Tibial artery (tissue), 4 donors: ENCODE measurements at regions of chr3 and their contacts with region 1.

Region 1: DNA sequence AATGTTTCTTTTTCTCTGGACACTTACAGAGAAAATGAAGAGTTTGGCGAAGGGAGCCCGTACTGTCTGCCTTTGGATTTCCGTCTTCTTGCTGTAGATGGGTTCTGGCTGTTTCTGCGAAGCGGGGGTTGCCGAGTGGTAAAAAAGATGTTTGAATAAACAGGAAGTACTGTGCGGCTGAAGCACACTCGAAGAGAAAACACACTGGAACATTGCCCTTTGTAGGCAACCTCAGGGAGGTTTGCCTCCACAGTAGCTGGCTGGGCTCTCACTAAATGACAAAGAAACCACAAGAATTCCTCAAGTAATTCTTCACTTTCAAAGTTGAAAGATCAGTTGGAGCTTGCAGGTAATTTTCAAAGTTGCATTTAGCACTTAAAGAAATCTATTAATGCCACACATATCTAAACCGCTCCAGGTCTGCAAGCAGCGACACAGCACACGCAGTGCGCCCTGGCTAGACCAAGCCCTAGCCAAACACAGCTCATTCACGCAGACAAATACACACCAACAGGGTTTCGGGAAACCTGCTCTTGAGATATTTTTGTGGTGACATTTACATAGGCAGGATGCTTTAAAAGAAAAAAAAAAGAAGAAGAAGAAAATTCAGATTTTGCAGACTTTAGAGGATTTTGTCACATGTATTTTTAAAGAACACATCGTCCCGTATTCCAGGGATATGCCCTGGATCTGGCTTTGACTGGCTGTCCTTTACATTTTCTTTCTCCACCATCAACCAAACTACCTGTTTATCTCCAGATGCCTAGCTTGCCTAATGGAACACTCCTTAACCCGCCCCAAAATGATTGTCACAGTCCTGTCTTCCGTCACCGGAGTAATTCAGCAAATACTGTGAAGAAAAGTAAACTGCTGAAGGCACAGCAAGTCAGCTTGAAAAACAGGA is 452.8 kb downstream of the FOXP1 start:
- DNase-seq: peak; percentile 76 to 79
- H3K4me3 ChIP-seq: peak overlapping the region; percentile 59 to 62
- H3K27ac ChIP-seq: peak overlapping the region; percentile 84 to 89
- H3K4me1 ChIP-seq: peaks cover 0 to 79% (median 38%) of the 10 kb centered on the region in 4 donors
- H3K27me3 ChIP-seq: no peaks in the 10 kb centered on the region
- CTCF ChIP-seq: no peak

Region 2: GRCh38 chr3:71064288-71064955 is 66.3 kb before region 1 on chr3:
- intact Hi-C with region 1: loop called (anchors 5 kb)
- DNase-seq: peak; percentile 56 to 79
- H3K4me3 ChIP-seq: peak overlapping the region; percentile 75 to 77
- H3K27ac ChIP-seq: peak overlapping the region; percentile 94 to 99
- H3K4me1 ChIP-seq: peaks cover 0 to 65% (median 37%) of the 10 kb centered on the region in 4 donors
- H3K27me3 ChIP-seq: no peaks in the 10 kb centered on the region
- CTCF ChIP-seq: peak in 1 of 2 experiments; percentile 44

Region 3: GRCh38 chr3:71168880-71169411 is 38.2 kb after region 1 on chr3:
- intact Hi-C with region 1: loop called (anchors 2 kb)
- DNase-seq: no peak
- H3K4me3 ChIP-seq: peak overlapping the region in 1 of 2 donors; percentile 14
- H3K27ac ChIP-seq: peak overlapping the region; percentile 71 to 80
- H3K4me1 ChIP-seq: peaks cover 0 to 93% (median 40%) of the 10 kb centered on the region in 4 donors
- H3K27me3 ChIP-seq: no peaks in the 10 kb centered on the region
- CTCF ChIP-seq: no peak

Region 4: GRCh38 chr3:71210257-71211007 is 79.7 kb after region 1 on chr3:
- intact Hi-C with region 1: loop called (anchors 1 kb)
- DNase-seq: peak; percentile 82 to 84
- H3K4me3 ChIP-seq: peak overlapping the region in 1 of 2 donors; percentile 12
- H3K27ac ChIP-seq: peak overlapping the region; percentile 84 to 87
- H3K4me1 ChIP-seq: peaks cover 0 to 69% (median 33%) of the 10 kb centered on the region in 4 donors
- H3K27me3 ChIP-seq: no peaks in the 10 kb centered on the region
- CTCF ChIP-seq: peak; percentile 30 to 61

Region 5: DNA sequence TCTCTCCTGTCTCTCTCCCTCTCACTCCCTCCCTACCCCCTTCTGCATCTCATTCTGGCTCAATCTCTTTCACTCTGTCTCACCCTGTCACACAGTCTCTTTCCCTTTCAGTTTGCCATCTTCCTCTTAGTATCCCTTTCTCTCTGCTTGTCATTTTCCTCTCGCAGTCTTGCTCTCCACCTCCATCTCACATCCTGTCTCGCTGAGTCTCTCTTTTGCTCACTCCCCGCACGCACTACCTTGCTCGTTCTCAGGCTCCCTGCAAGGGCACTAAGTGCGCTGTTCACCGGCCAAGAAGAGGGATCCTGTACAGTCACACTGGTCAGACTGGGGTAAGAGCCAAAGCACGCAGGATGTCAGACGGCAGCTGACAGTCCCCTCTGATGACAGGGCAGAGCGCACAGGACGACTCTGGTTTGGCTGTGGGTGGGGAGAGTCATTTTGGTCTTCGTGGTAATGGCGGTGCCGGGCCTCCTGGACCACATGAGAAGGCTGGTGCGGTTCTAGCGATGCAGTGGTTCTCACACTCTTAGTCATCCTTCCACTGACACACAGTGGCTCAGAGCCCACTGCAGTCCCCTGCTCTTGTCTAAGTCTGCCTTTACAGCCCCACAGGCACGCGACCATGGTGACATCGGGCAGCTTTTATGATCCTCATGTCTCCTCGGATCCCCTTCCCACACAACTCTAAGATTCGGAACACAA is 96.0 kb after region 1 on chr3:
- intact Hi-C with region 1: no loop called
- DNase-seq: peak in 1 of 2 donors; percentile 72
- H3K4me3 ChIP-seq: peak overlapping the region; percentile 41 to 44
- H3K27ac ChIP-seq: peak overlapping the region; percentile 80 to 82
- H3K4me1 ChIP-seq: peaks cover 0 to 73% (median 18%) of the 10 kb centered on the region in 4 donors
- H3K27me3 ChIP-seq: no peaks in the 10 kb centered on the region
- CTCF ChIP-seq: no peak

Region 6: DNA sequence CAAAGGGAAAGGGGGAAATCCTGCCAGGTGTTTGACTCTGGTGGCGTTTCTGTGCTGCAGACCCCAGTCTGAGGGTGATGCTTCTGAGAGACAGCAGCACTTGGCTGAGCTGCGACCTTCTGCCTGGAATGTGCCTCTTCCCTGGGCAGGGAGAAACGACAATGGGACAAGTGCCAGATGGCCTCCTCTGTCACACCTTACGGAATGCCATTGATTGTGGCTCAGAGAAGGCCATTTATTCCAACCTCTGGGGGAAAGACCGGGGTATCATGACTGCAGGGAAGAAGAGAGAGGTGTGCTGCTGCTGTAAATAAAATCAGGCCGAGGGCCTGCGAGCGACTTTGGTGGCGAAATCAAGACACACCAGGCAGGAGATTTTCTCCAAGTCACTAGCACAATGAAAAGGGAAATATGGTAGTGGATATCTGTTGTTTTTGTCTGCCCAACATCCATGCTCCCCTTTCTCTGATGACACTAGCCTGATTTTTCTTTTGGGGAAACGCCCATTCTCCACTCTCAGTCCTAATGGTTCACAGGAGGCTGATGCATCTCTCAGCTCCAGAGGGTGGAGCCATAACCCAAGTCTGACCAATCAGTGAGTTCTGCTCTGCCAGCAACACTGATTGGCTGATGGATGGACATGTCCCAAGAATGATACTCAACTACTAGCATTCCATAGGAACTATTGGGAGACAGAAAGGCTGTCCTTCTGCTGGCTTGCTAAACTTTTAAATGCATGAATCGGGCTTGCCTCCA is 116.7 kb after region 1 on chr3:
- intact Hi-C with region 1: loop called (anchors 5 kb)
- DNase-seq: no peak
- H3K4me3 ChIP-seq: no peak overlapping the region
- H3K27ac ChIP-seq: peak overlapping the region; percentile 80 to 86
- H3K4me1 ChIP-seq: peaks cover 0 to 49% (median 30%) of the 10 kb centered on the region in 4 donors
- H3K27me3 ChIP-seq: no peaks in the 10 kb centered on the region
- CTCF ChIP-seq: no peak